Naive thymus-derived CD4-positive, alpha-beta T cell (primary cell): ENCODE measurements at regions of chr22 and their contacts with region 1.

Region 1: DNA sequence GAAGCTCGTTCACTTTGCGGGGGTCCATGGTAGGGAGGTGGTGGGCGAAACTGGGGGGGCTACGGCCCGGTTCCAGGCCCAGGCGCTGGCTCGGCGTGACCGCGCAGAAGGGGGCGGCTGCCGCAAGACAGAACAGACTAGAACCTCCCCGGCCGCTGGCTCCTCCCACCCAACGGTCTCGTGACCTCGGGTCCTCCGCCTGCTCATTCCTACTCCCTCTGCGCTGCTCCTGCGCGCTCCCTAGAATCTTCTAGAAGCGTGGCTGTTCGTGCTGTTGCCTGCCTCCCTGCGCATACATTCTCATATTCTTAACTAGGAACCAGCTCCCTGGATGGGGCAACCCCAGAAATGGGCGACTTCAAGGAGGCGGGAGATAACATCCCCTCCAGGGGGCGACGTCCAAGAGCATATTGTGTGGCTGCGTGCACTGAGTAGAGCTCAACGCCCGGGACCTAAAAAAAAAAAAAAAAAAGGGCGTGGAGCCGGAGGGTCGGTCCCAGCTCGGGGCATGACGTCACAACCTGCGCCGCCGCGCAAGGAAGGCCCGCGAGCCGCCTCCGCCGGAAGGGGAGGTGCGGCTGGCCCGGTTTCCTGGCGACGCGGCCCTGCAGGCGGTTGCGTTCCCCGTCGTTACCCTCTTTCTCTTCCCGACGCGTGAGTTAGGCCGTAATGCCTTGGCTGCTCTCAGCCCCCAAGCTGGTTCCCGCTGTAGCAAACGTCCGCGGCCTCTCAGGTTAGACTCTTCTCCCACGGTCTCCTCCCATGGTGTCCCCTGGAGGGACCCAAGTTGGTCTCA is at the starts of genes ST13 and XPNPEP3:
- DNase-seq: peak; percentile 96 to 98 (median 97)
- ATAC-seq: peak; percentile 94
- H3K4me3 ChIP-seq: peak within 1 kb of the TSS; percentile 83
- H3K4me3 Mint-ChIP-seq: peak within 1 kb of the TSS; percentile 94 to 100 (median 98)
- H3K27ac ChIP-seq: peak within 1 kb of the TSS; percentile 97
- H3K27ac Mint-ChIP-seq: peak within 1 kb of the TSS; percentile 98 to 100 (median 100)
- H3K4me1 ChIP-seq: peaks cover 24 to 39% of the 10 kb centered on the region in 2 donors
- H3K4me1 Mint-ChIP-seq: peaks cover 25 to 72% (median 64%) of the 10 kb centered on the region in 7 donors
- H3K27me3 ChIP-seq: no peaks in the 10 kb centered on the region
- H3K27me3 Mint-ChIP-seq: peaks cover 0 to 2% (median 0%) of the 10 kb centered on the region in 5 donors
- total RNA-seq, gene ST13: 126 to 247 (median 185) TPM
- total RNA-seq, gene XPNPEP3: 14.4 to 21.8 (median 19.0) TPM

Region 2: DNA sequence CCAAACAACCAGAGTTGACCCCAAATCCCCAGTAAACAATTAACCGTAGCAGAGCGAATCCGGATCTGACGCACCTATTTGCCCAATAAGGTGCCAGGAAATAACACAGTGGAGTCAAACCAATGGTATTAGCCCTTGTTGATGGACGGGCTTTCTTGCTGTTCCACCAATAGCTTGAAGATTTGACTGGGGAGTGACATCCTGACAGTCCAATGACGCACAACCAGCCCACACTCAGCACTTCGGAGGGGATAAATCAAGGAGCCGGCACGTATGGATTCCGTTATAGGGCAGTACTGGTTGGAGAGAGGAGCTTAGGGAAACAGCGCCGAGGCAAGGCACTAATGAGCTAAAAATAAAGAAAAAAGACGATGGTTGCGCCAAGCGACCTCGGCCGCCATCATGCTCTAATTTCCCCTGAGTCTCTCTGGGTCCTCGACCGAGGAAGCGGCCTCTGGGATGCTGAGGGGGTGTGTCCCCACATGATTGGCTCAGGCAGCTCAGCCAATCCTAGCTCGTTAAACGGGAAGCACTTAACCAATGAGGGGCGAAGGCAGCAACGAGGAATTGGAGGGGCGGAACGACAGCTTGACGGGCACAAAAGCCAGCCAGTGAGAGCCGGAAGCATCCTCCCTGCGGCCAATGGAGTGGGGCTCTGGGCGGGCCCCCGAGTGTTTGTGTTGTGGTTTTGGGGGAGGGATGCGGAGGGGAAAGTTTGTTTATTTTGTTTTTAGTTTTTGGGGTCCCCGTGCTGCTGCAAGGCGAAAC is 812.4 kb before region 1 on chr22:
- CTCF ChIA-PET with region 1: no interaction called
- POLR2A ChIA-PET with region 1: interaction called, 9 read pairs
- intact Hi-C with region 1: loop called in 1 of 2 experiments (anchors 5 kb)
- DNase-seq: peak; percentile 87 to 100 (median 99)
- ATAC-seq: peak; percentile 92
- H3K4me3 ChIP-seq: peak overlapping the region; percentile 81
- H3K4me3 Mint-ChIP-seq: peak overlapping the region; percentile 94 to 99 (median 98)
- H3K27ac ChIP-seq: peak overlapping the region; percentile 88
- H3K27ac Mint-ChIP-seq: peak overlapping the region; percentile 98 to 100 (median 99)
- H3K4me1 ChIP-seq: peaks cover 15 to 29% of the 10 kb centered on the region in 2 donors
- H3K4me1 Mint-ChIP-seq: peaks cover 23 to 53% (median 40%) of the 10 kb centered on the region in 7 donors
- H3K27me3 ChIP-seq: no peaks in the 10 kb centered on the region
- H3K27me3 Mint-ChIP-seq: peaks cover 3 to 17% (median 7%) of the 10 kb centered on the region in 5 donors

Region 3: DNA sequence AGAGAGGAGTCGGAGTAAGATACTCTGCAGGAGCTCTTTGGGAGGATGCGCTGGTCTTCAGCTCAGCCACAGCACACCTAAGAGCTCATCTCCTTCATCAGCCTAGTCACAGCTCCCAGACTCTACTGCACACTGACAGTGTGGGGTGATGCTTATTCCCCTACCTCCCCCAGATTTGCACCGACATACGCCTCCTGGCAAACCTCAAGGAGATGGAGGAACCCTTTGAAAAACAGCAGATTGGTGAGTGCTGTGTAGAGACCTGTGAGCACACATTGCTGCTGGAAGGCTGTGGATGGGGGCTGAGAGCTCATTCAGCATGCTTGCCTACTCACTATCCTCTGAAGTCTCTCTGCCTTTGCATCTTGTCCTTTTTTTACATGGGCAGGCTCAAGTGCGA is 495.6 kb before region 1 on chr22:
- CTCF ChIA-PET with region 1: no interaction called
- POLR2A ChIA-PET with region 1: no interaction called
- intact Hi-C with region 1: no loop called
- DNase-seq: no peak
- ATAC-seq: no peak
- H3K4me3 ChIP-seq: no peak overlapping the region
- H3K4me3 Mint-ChIP-seq: no peak overlapping the region
- H3K27ac ChIP-seq: no peak overlapping the region
- H3K27ac Mint-ChIP-seq: peak overlapping the region in 5 of 9 donors; percentile 5 to 81 (median 54)
- H3K4me1 ChIP-seq: no peaks in the 10 kb centered on the region
- H3K4me1 Mint-ChIP-seq: peaks cover 0 to 11% (median 3%) of the 10 kb centered on the region in 7 donors
- H3K27me3 ChIP-seq: no peaks in the 10 kb centered on the region
- H3K27me3 Mint-ChIP-seq: no peaks in the 10 kb centered on the region

Region 4: GRCh38 chr22:40578171-40578570 is 278.5 kb before region 1 on chr22:
- CTCF ChIA-PET with region 1: no interaction called
- POLR2A ChIA-PET with region 1: no interaction called
- intact Hi-C with region 1: no loop called
- DNase-seq: peak in 7 of 9 donors; percentile 7 to 51 (median 28)
- ATAC-seq: peak; percentile 45
- H3K4me3 ChIP-seq: no peak overlapping the region
- H3K4me3 Mint-ChIP-seq: peak overlapping the region; percentile 30 to 81 (median 67)
- H3K27ac ChIP-seq: peak overlapping the region; percentile 47
- H3K27ac Mint-ChIP-seq: peak overlapping the region; percentile 83 to 98 (median 95)
- H3K4me1 ChIP-seq: peaks cover 0 to 13% of the 10 kb centered on the region in 2 donors
- H3K4me1 Mint-ChIP-seq: peaks cover 7 to 34% (median 19%) of the 10 kb centered on the region in 7 donors
- H3K27me3 ChIP-seq: no peaks in the 10 kb centered on the region
- H3K27me3 Mint-ChIP-seq: no peaks in the 10 kb centered on the region

Region 5: DNA sequence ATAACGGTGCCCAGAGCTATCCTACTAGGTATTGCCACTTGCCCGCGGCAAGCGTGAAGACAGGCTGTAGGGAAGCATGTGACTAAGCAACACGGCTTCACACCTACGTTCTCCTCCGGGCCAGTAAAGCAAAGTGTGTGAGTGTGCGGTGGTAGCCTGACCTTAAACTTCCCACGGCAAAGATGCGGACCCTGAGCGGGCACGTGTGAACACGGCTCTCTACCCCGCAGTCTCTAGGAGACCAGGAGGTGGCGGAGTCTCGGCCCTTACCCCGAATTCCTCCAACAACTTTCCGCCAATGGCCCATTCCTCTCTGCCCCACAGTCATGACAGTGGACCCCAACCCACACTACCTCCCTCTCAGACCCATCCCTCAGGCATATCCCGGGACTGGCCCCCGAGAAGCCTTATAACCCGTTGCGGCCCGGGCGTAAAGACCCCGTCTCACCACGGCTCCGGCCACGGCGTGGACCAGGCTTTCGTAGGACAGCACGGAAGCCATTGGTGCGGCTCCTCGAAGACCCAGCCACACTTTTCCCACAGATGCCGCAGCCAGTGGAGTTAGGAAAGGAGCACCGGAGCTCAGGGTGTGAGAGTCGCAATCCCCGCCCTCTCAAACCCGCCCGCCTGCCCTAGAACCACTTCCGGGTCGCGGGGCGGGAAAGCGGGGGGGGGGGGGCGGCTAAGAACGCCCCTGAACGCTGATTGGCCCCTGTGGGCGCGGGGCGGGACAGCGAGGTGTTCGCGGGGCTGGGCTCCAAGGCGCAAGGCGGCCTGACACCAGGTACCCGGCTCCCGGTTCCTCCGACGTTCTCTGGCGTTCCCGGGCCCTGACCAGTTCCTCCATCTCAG is 37.7 kb before region 1 on chr22 and contains the start of gene SLC25A17:
- CTCF ChIA-PET with region 1: interaction called, 10 read pairs
- POLR2A ChIA-PET with region 1: no interaction called
- intact Hi-C with region 1: loop called (anchors 1 kb)
- DNase-seq: peak; percentile 71 to 88 (median 82)
- ATAC-seq: peak; percentile 95
- H3K4me3 ChIP-seq: peak within 1 kb of the TSS; percentile 100
- H3K4me3 Mint-ChIP-seq: peak within 1 kb of the TSS; percentile 79 to 99 (median 93)
- H3K27ac ChIP-seq: peak within 1 kb of the TSS; percentile 86
- H3K27ac Mint-ChIP-seq: peak within 1 kb of the TSS; percentile 57 to 96 (median 88)
- H3K4me1 ChIP-seq: peaks cover 9 to 26% of the 10 kb centered on the region in 2 donors
- H3K4me1 Mint-ChIP-seq: peaks cover 22 to 42% (median 37%) of the 10 kb centered on the region in 7 donors
- H3K27me3 ChIP-seq: no peaks in the 10 kb centered on the region
- H3K27me3 Mint-ChIP-seq: no peaks in the 10 kb centered on the region
- total RNA-seq, gene SLC25A17: 6.8 to 22.1 (median 13.1) TPM

Region 6: DNA sequence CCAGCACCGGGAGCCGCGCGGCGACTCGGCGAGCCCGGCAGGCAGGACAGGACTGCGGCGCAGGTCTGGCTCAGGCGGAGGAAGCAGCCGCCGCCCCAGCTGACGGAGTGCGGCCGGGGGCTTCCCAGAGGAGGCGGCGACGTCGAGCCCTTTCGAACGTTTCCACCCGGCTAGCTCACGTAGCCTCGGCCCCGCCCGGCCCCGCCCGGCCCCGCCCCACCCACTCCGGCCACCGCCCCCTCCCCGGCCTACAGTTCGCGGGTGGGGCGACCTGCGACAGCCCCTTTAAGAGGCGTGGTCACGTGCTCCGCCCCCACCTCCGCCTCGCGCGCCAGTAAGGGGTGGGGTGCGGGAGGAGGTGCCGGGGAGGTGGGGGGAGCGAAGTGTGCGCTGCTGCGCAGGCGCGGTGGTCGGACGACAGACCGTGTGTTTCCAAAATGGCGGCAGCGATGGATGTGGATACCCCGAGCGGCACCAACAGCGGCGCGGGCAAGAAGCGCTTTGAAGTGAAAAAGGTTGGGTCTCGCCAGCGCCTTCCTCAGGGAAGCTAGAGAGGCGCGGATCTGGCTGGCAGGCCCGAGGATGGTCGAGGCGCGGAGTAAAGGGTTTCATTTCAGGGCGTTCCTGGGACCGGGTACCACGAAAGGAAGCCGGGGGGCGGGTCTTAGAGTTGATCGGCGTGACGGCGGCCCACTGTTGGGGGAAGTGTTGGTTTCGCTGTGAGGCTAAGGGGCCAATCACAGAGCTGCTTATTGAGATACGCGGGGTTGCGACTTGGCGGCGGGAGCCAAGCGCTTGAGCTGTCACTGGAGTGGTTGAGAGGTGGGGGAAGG is 94.5 kb after region 1 on chr22 and contains the start of gene RBX1:
- CTCF ChIA-PET with region 1: no interaction called
- POLR2A ChIA-PET with region 1: interaction called, 3 read pairs
- intact Hi-C with region 1: loop called (anchors 1 kb)
- DNase-seq: peak; percentile 96 to 100 (median 99)
- ATAC-seq: peak; percentile 92
- H3K4me3 ChIP-seq: peak within 1 kb of the TSS; percentile 98
- H3K4me3 Mint-ChIP-seq: peak within 1 kb of the TSS; percentile 91 to 99 (median 98)
- H3K27ac ChIP-seq: peak within 1 kb of the TSS; percentile 99
- H3K27ac Mint-ChIP-seq: peak within 1 kb of the TSS; percentile 96 to 100 (median 99)
- H3K4me1 ChIP-seq: peaks cover 16 to 19% of the 10 kb centered on the region in 2 donors
- H3K4me1 Mint-ChIP-seq: peaks cover 20 to 43% (median 39%) of the 10 kb centered on the region in 7 donors
- H3K27me3 ChIP-seq: no peaks in the 10 kb centered on the region
- H3K27me3 Mint-ChIP-seq: no peaks in the 10 kb centered on the region
- total RNA-seq, gene RBX1: 28.9 to 91.3 (median 32.7) TPM

Region 7: GRCh38 chr22:40982482-40983385 is 126.0 kb after region 1 on chr22:
- CTCF ChIA-PET with region 1: no interaction called
- POLR2A ChIA-PET with region 1: no interaction called
- intact Hi-C with region 1: no loop called
- DNase-seq: no peak
- ATAC-seq: no peak
- H3K4me3 ChIP-seq: no peak overlapping the region
- H3K4me3 Mint-ChIP-seq: no peak overlapping the region
- H3K27ac ChIP-seq: no peak overlapping the region
- H3K27ac Mint-ChIP-seq: no peak overlapping the region
- H3K4me1 ChIP-seq: no peaks in the 10 kb centered on the region
- H3K4me1 Mint-ChIP-seq: peaks cover 0 to 2% (median 0%) of the 10 kb centered on the region in 7 donors
- H3K27me3 ChIP-seq: no peaks in the 10 kb centered on the region
- H3K27me3 Mint-ChIP-seq: no peaks in the 10 kb centered on the region

Region 8: GRCh38 chr22:41301105-41302020 is 444.7 kb after region 1 on chr22 and contains the start of gene ZC3H7B:
- CTCF ChIA-PET with region 1: no interaction called
- POLR2A ChIA-PET with region 1: interaction called, 4 read pairs
- intact Hi-C with region 1: loop called in 1 of 2 experiments (anchors 2 kb)
- DNase-seq: peak; percentile 73 to 89 (median 83)
- ATAC-seq: peak; percentile 98
- H3K4me3 ChIP-seq: peak within 1 kb of the TSS; percentile 22
- H3K4me3 Mint-ChIP-seq: peak within 1 kb of the TSS; percentile 67 to 91 (median 85)
- H3K27ac ChIP-seq: peak within 1 kb of the TSS; percentile 82
- H3K27ac Mint-ChIP-seq: peak within 1 kb of the TSS; percentile 72 to 96 (median 87)
- H3K4me1 ChIP-seq: peaks cover 13 to 15% of the 10 kb centered on the region in 2 donors
- H3K4me1 Mint-ChIP-seq: peaks cover 19 to 35% (median 32%) of the 10 kb centered on the region in 7 donors
- H3K27me3 ChIP-seq: no peaks in the 10 kb centered on the region
- H3K27me3 Mint-ChIP-seq: no peaks in the 10 kb centered on the region
- total RNA-seq, gene ZC3H7B: 36.9 to 65.9 (median 42.7) TPM

Region 9: GRCh38 chr22:41367039-41367679 is 510.4 kb after region 1 on chr22:
- CTCF ChIA-PET with region 1: no interaction called
- POLR2A ChIA-PET with region 1: no interaction called
- intact Hi-C with region 1: no loop called
- DNase-seq: peak in 6 of 9 donors; percentile 10 to 31 (median 22)
- ATAC-seq: peak; percentile 74
- H3K4me3 ChIP-seq: no peak overlapping the region
- H3K4me3 Mint-ChIP-seq: peak overlapping the region in 5 of 10 donors; percentile 27 to 60 (median 41)
- H3K27ac ChIP-seq: no peak overlapping the region
- H3K27ac Mint-ChIP-seq: no peak overlapping the region
- H3K4me1 ChIP-seq: no peaks in the 10 kb centered on the region
- H3K4me1 Mint-ChIP-seq: peaks cover 0 to 11% (median 3%) of the 10 kb centered on the region in 7 donors
- H3K27me3 ChIP-seq: no peaks in the 10 kb centered on the region
- H3K27me3 Mint-ChIP-seq: peaks cover 0 to 12% (median 0%) of the 10 kb centered on the region in 5 donors

Region 10: DNA sequence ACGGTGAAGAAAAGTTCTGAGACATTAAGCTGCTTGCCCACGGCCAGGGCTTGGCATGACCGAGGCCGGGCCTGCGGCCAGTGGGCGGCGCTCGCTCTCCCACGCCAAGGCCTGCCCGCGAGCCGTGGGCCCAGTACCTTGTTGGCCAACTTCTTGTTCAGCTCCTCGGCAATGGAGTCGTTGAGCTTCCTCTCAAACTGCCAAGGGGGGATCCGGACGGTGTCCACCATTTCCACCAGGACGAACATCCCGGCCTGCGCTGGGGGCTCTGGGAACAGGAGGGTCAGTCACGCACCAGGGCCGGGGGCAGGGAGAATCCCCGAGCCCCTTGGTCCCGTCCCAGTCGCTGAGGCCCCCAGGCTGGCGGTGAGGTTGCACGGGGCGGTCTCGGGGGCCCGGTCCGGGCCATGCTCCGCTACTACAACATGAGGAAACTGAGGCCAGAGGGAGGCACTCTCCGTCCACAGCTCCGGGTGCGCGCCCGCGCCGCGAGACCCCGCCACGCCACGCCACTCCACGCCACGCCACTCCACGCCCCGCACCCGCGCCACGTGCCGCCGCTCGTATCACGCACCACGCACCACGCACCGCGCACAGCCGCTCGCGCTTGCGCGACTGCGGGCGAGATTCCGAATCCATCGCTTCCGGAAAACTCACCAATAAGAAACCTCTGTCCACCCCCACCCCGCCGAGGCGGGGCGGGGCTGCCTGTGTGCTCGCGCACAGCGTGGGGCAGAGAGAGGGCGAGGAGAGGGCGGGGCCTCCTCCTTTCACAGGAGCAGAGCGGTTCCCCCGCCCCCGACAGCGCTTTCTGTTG is 687.4 kb after region 1 on chr22 and contains the start of gene POLR3H:
- CTCF ChIA-PET with region 1: no interaction called
- POLR2A ChIA-PET with region 1: no interaction called
- intact Hi-C with region 1: loop called in 1 of 2 experiments (anchors 2 kb)
- DNase-seq: peak; percentile 89 to 97 (median 95)
- ATAC-seq: peak; percentile 100
- H3K4me3 ChIP-seq: peak within 1 kb of the TSS; percentile 96
- H3K4me3 Mint-ChIP-seq: peak within 1 kb of the TSS; percentile 82 to 100 (median 97)
- H3K27ac ChIP-seq: peak within 1 kb of the TSS; percentile 84
- H3K27ac Mint-ChIP-seq: peak within 1 kb of the TSS; percentile 88 to 98 (median 95)
- H3K4me1 ChIP-seq: peaks cover 7 to 15% of the 10 kb centered on the region in 2 donors
- H3K4me1 Mint-ChIP-seq: peaks cover 30 to 52% (median 45%) of the 10 kb centered on the region in 7 donors
- H3K27me3 ChIP-seq: no peaks in the 10 kb centered on the region
- H3K27me3 Mint-ChIP-seq: no peaks in the 10 kb centered on the region
- total RNA-seq, gene POLR3H: 21.7 to 59.6 (median 28.5) TPM